Activated naive CD4-positive, alpha-beta T cell treated with anti-CD3 and anti-CD28 coated beads for 36 hours (primary cell): ENCODE measurements at regions of chr4 and their contacts with region 1.

Region 1: DNA sequence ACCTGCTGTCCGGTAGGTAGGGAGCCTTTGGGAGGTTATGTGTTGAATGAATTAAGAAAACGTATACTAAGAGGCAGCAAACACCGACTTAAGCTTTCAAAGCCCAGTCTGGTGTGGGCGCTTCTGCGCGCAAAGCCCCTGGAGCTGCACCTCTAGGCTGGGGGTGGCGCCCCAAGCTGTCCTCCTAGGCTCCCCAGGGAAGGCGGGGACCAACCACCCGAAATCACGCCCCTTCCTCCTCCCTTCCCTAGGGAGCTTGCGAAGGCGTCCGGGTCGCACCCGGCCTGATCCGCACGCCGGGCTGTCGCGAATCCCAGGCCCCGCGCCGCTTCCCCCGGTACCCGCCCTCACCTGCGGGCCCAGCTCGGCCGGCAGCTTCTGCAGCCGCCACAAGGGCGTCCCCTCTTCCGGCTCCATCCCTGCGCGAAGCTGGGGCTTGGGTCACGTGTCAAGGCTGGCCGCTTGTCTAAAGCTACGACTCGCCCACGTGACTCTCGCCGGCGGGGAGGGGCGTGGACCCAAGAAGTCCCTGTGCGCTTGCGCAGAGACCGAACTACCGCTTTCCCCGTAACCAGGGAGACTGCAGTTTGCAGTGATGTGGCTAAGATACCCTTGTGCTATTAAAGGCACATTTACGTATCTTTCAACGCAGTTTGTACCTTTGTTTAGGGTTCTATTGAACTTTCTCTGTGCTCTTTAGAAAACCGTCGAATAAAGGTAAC is at the start of gene COMMD8:
- DNase-seq: peak; percentile 98
- H3K4me3 Mint-ChIP-seq: peak within 1 kb of the TSS; percentile 81
- H3K27ac Mint-ChIP-seq: peak within 1 kb of the TSS; percentile 60
- H3K4me1 Mint-ChIP-seq: peaks cover 27% of the 10 kb centered on the region
- H3K27me3 Mint-ChIP-seq: no peaks in the 10 kb centered on the region
- total RNA-seq, gene COMMD8: 29.0 to 29.6 TPM

Region 2: DNA sequence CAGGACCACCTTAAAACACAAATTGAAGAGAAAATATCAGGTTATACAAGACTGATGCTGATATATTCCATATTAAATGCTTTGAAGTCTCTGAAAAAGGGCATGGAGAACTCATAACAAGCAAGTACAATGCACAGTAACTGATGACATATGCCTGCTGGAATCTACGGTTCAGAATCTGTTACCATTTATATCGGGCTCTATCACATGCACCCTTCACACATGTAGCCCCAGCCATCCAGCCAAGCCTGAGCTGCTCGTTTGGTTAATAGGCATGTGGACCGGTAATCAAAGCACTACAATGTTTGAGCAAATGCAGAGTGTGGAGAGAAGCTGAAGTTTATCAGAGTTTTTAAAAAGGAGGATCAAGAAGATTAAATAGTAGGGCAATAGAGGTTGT is 11.7 kb before region 1 on chr4:
- CTCF ChIA-PET with region 1: no interaction called
- intact Hi-C with region 1: no loop called
- DNase-seq: no peak
- H3K4me3 Mint-ChIP-seq: no peak overlapping the region
- H3K27ac Mint-ChIP-seq: no peak overlapping the region
- H3K4me1 Mint-ChIP-seq: peaks cover 5% of the 10 kb centered on the region
- H3K27me3 Mint-ChIP-seq: no peaks in the 10 kb centered on the region

Region 3: GRCh38 chr4:47485047-47485692 is 21.8 kb after region 1 on chr4 and contains the start of gene ATP10D:
- CTCF ChIA-PET with region 1: interaction called, 5 read pairs
- intact Hi-C with region 1: loop called (anchors 1 kb)
- DNase-seq: peak; percentile 82
- H3K4me3 Mint-ChIP-seq: peak within 1 kb of the TSS; percentile 93
- H3K27ac Mint-ChIP-seq: peak within 1 kb of the TSS; percentile 65
- H3K4me1 Mint-ChIP-seq: peaks cover 16% of the 10 kb centered on the region
- H3K27me3 Mint-ChIP-seq: no peaks in the 10 kb centered on the region
- total RNA-seq, gene ATP10D: 2.7 to 3.1 TPM

Region 4: GRCh38 chr4:47531241-47531953 is 68.0 kb after region 1 on chr4:
- CTCF ChIA-PET with region 1: no interaction called
- intact Hi-C with region 1: loop called (anchors 1 kb)
- DNase-seq: peak; percentile 66
- H3K4me3 Mint-ChIP-seq: no peak overlapping the region
- H3K27ac Mint-ChIP-seq: no peak overlapping the region
- H3K4me1 Mint-ChIP-seq: peaks cover 33% of the 10 kb centered on the region
- H3K27me3 Mint-ChIP-seq: no peaks in the 10 kb centered on the region

Region 5: DNA sequence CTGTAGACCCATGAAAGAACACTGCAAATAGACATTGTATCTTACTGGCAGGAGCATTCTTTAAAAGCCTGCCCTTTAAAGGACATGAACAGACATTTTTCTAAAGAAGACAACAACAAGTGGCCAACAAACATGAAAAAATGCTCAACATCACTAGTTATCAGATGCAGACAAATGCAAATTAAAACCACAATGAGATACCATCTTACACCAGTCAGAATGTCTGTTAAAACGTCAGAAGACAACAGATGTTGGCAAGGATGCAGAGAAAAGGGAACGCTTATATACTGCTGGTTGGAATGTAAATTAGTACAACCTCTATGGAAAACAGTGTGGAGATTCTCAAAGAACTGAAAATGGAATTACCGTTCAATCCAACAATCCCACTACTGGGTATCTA is 98.9 kb after region 1 on chr4:
- CTCF ChIA-PET with region 1: interaction called, 5 read pairs
- intact Hi-C with region 1: loop called (anchors 1 kb)
- DNase-seq: no peak
- H3K4me3 Mint-ChIP-seq: no peak overlapping the region
- H3K27ac Mint-ChIP-seq: no peak overlapping the region
- H3K4me1 Mint-ChIP-seq: no peaks in the 10 kb centered on the region
- H3K27me3 Mint-ChIP-seq: no peaks in the 10 kb centered on the region

Region 6: GRCh38 chr4:47914220-47914925 is 451.0 kb after region 1 on chr4 and contains the start of gene NFXL1:
- CTCF ChIA-PET with region 1: no interaction called
- intact Hi-C with region 1: loop called (anchors 1 kb)
- DNase-seq: peak; percentile 97
- H3K4me3 Mint-ChIP-seq: peak within 1 kb of the TSS; percentile 90
- H3K27ac Mint-ChIP-seq: peak within 1 kb of the TSS; percentile 91
- H3K4me1 Mint-ChIP-seq: peaks cover 29% of the 10 kb centered on the region
- H3K27me3 Mint-ChIP-seq: no peaks in the 10 kb centered on the region
- total RNA-seq, gene NFXL1: 10.4 to 11.4 TPM

Region 7: DNA sequence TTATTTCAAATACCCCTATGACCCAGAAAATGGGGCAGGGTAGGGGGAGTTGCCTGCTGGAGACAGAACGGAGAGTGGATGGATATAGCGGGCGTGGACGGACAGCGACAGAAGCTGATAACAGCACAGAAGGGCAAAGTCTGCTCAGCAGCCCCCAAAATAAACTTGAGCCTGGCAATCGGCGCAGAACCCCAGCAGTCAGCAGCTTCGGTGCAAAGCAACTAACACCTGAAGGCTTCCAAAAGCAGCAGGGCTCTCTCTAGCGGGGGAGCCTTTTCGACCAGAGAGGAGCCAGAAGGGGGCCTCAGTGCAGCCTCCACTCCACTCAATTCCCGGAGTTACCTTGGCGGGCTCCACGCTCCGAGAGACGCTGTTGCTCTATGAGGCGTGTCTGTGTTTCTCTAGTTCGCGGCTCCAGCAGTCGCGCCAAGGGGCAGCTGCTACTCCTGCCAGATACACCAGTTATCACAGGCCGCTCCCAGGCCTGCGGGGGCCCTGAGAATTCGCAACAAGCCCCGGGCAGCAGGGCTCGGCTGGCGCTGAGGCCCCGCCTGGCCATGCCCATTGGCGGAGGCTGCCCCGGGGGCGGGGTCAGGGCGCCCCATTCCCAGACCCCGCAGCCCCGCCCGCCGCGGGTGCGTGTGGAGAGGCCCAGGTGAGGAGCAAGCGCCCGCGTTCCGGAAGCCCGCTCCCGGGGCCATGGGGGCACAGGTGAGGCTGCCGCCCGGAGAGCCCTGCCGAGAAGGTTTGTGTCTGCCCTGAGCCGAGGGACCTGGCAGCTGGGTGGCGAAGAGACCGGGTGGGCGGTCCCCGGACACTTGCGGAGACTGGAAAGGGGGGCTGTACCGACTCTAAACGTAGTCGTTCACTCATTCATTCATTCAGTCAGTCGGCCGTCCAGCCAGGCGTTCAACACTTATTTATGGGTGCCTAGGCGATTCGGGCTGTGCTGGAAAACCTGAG is 553.0 kb after region 1 on chr4 and contains the starts of genes CNGA1 and NIPAL1:
- CTCF ChIA-PET with region 1: no interaction called
- intact Hi-C with region 1: loop called (anchors 5 kb)
- DNase-seq: peak; percentile 72
- H3K4me3 Mint-ChIP-seq: peak within 1 kb of the TSS; percentile 81
- H3K27ac Mint-ChIP-seq: peak within 1 kb of the TSS; percentile 46
- H3K4me1 Mint-ChIP-seq: peaks cover 26% of the 10 kb centered on the region
- H3K27me3 Mint-ChIP-seq: peaks cover 5% of the 10 kb centered on the region
- total RNA-seq, gene CNGA1: 0.26 to 0.94 TPM
- total RNA-seq, gene NIPAL1: 1.0 to 2.0 TPM